PC-9 (cell line): ENCODE measurements at regions of chrX and their contacts with region 1.

Region 1: GRCh38 chrX:13223868-13224555 is 95.8 kb downstream of the ATXN3L start:
- DNase-seq: peak; percentile 49 to 89
- H3K4me3 ChIP-seq: no peak overlapping the region
- H3K27ac ChIP-seq: peak overlapping the region; percentile 86
- H3K4me1 ChIP-seq: peaks cover 20% of the 10 kb centered on the region
- H3K27me3 ChIP-seq: no peaks in the 10 kb centered on the region
- CTCF ChIP-seq: no peak

Region 2: GRCh38 chrX:12824944-12825343 is 399.1 kb before region 1 on chrX:
- CTCF ChIA-PET with region 1: no interaction called
- POLR2A ChIA-PET with region 1: interaction called, 12 read pairs
- intact Hi-C with region 1: no loop called
- DNase-seq: no peak
- H3K4me3 ChIP-seq: no peak overlapping the region
- H3K27ac ChIP-seq: 0 out of 2 replicates have a peak overlapping the region, but pooled peaks have one; percentile 49
- H3K4me1 ChIP-seq: peaks cover 14% of the 10 kb centered on the region
- H3K27me3 ChIP-seq: no peaks in the 10 kb centered on the region
- CTCF ChIP-seq: no peak

Region 3: DNA sequence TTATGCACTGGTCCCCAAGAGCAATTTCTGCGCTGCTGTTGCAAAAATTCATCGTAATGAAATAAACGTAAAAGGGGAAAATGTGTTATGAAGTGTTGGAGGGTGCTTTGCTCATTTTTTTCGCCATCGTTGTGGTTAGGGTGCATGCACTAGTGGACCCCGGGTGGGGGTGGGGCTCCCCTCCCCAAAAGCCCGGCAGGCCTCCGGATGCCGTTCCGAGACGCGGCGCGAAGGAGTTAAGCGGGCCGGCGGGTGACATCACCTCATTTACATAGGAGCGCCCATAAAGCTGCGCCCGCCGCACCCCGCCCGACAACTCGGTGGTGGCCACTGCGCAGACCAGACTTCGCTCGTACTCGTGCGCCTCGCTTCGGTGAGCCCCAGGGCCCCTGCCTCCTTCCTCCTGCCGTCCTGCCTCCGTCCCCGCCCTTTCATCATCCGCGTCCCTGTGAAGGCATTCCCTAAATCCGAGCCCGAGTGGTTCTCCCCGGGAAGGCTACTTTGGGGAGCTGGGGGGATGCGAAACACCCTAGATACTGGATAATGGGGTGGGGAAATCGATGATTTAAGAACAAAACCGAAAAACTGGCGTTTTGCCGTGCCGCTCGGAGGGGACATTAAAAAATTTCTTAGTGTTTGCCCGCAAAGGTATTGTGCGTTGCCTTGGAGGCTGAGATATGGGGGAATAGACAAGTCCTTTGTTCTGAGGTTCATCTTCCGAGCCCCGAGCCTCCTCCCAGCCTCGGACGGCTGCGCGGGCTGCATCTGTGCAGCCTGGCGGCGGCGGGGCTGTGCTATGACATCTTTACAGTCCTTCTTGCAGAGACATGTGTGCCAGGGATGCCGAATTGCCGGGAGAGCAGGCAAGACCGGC is 249.0 kb before region 1 on chrX and contains the start of gene TMSB4X:
- CTCF ChIA-PET with region 1: no interaction called
- POLR2A ChIA-PET with region 1: interaction called, 3 read pairs
- intact Hi-C with region 1: loop called (anchors 10 kb)
- DNase-seq: peak; percentile 71 to 85
- H3K4me3 ChIP-seq: peak within 1 kb of the TSS; percentile 99
- H3K27ac ChIP-seq: peak within 1 kb of the TSS; percentile 99
- H3K4me1 ChIP-seq: peaks cover 36% of the 10 kb centered on the region
- H3K27me3 ChIP-seq: no peaks in the 10 kb centered on the region
- CTCF ChIP-seq: no peak
- total RNA-seq, gene TMSB4X: 2,589 and 3,588 TPM in 2 replicates

Region 4: DNA sequence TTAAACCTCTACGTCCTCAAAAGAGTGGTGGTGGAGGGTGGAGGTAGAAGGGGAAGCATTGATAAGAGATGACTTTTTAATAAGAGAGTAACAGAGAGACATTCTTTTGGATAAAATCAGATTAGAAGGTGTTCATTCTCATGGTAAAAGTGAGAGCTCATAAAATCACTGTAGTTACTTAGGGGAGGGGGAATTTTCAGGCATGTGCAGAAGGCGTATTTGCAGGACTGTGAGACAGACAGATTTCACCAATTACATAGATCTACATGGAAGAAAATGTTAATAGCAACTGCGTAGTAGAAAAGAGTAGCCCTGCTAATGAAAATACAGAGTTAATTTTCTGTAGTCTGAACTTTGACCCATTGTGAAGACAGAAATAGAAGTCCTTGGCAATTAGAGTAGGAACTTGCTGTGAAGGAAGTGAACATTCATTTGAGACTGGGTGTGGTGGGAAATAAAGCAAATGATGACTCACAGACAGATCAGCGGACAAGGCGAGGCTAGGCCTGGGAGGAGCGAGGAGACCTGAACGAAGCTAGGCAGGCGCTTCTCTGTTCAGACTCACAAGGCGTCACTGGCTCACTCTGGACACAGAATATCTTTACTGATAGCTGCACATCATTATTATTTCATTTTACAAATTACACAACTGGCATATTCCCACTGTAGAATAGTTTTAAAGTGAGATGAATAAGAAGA is 122.4 kb before region 1 on chrX:
- CTCF ChIA-PET with region 1: no interaction called
- POLR2A ChIA-PET with region 1: no interaction called
- intact Hi-C with region 1: loop called (anchors 1 kb)
- DNase-seq: peak; percentile 72 to 93
- H3K4me3 ChIP-seq: no peak overlapping the region; the same call in 1 of the 2 replicates
- H3K27ac ChIP-seq: peak overlapping the region; percentile 96
- H3K4me1 ChIP-seq: peaks cover 48% of the 10 kb centered on the region
- H3K27me3 ChIP-seq: no peaks in the 10 kb centered on the region
- CTCF ChIP-seq: no peak

Region 5: DNA sequence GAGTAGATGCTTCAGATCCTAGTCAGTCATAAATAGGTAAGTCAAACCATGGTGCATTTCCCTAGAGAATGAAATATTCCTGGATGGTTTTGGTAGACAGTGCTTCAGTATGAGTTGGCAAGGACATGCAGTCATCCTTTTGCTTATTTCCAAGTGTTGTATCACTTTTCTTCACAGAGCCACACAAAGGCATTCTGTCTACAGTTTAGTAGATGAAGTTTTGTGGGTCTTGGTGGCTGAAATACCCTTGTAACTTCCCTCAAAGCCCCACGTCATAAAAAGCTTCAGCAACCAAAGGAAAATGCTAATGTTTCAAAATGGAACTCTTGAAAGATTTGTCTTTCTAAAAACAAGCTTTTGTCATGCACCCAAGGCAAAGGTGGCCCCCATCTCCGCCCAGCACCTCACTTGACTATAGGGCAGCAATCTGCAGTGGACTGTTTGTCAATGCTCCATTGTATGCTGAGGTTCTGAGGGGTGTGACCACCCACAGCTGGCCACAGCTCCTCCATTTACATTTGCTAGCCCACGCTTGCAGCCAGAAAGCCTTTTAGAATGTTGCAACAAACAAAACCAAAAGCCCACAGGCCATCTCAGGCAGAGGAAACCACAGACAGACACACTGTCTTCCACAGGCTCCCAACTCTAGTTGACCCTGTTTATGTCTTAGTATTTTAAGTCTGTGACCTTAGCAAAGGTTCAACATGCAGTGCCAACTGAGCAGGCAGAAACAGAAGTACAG is 92.4 kb before region 1 on chrX:
- CTCF ChIA-PET with region 1: no interaction called
- POLR2A ChIA-PET with region 1: interaction called, 19 read pairs
- intact Hi-C with region 1: no loop called
- DNase-seq: no peak
- H3K4me3 ChIP-seq: no peak overlapping the region
- H3K27ac ChIP-seq: no peak overlapping the region
- H3K4me1 ChIP-seq: peaks cover 8% of the 10 kb centered on the region; the same call in 1 of the 2 replicates
- H3K27me3 ChIP-seq: no peaks in the 10 kb centered on the region
- CTCF ChIP-seq: no peak

Region 6: DNA sequence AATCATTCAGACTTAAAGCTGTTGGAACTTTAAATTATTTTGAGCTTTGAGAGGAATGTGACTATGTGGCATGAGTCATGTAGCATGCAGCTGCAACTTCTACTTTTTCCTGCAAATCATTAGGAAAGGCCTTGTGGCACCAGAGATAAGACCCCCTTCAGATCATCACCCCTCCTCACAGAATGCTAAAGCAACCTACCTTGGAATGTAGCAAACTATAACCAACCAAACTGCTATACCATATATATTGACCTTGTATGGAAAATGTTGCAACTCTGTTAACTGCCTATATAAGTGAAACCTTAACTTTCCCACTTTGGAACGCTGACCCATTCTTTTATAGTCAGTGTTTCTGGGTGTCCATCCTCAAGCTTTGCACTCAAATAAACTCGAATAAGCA is 63.8 kb after region 1 on chrX:
- CTCF ChIA-PET with region 1: no interaction called
- POLR2A ChIA-PET with region 1: no interaction called
- intact Hi-C with region 1: loop called (anchors 5 kb)
- DNase-seq: peak; percentile 11 to 37
- H3K4me3 ChIP-seq: no peak overlapping the region
- H3K27ac ChIP-seq: peak overlapping the region; percentile 57
- H3K4me1 ChIP-seq: peaks cover 21% of the 10 kb centered on the region
- H3K27me3 ChIP-seq: no peaks in the 10 kb centered on the region
- CTCF ChIP-seq: no peak

Region 7: GRCh38 chrX:13482746-13483145 is 258.7 kb after region 1 on chrX:
- CTCF ChIA-PET with region 1: no interaction called
- POLR2A ChIA-PET with region 1: interaction called, 14 read pairs
- intact Hi-C with region 1: no loop called
- DNase-seq: no peak
- H3K4me3 ChIP-seq: no peak overlapping the region
- H3K27ac ChIP-seq: no peak overlapping the region
- H3K4me1 ChIP-seq: peaks cover 36% of the 10 kb centered on the region
- H3K27me3 ChIP-seq: no peaks in the 10 kb centered on the region
- CTCF ChIP-seq: no peak